Left ventricle myocardium inferior (tissue), 1 donor: ENCODE measurements at regions of chr20 and their contacts with region 1.

Region 1: GRCh38 chr20:63056236-63056948 is 49.6 kb upstream of the BHLHE23 start:
- DNase-seq: peak; percentile 16
- H3K4me3 ChIP-seq: peak overlapping the region; percentile 23
- H3K27ac ChIP-seq: no peak overlapping the region
- H3K4me1 ChIP-seq: peaks cover 8% of the 10 kb centered on the region
- H3K27me3 ChIP-seq: peaks cover 97% of the 10 kb centered on the region
- CTCF ChIP-seq: peak; percentile 93

Region 2: GRCh38 chr20:62952373-62952967 is 103.9 kb before region 1 on chr20 and contains the start of gene SLC17A9:
- intact Hi-C with region 1: no loop called
- DNase-seq: peak; percentile 68
- H3K4me3 ChIP-seq: peak within 1 kb of the TSS; percentile 53
- H3K27ac ChIP-seq: peak within 1 kb of the TSS; percentile 82
- H3K4me1 ChIP-seq: peaks cover 47% of the 10 kb centered on the region
- H3K27me3 ChIP-seq: no peaks in the 10 kb centered on the region
- CTCF ChIP-seq: no peak
- total RNA-seq, gene SLC17A9: 0.47 TPM

Region 3: GRCh38 chr20:63106108-63106764 is 49.8 kb after region 1 on chr20:
- intact Hi-C with region 1: no loop called
- DNase-seq: peak; percentile 26
- H3K4me3 ChIP-seq: no peak overlapping the region
- H3K27ac ChIP-seq: no peak overlapping the region
- H3K4me1 ChIP-seq: peaks cover 12% of the 10 kb centered on the region
- H3K27me3 ChIP-seq: peaks cover 81% of the 10 kb centered on the region
- CTCF ChIP-seq: no peak

Region 4: GRCh38 chr20:63178889-63179686 is 122.7 kb after region 1 on chr20:
- intact Hi-C with region 1: loop called (anchors 10 kb)
- DNase-seq: peak; percentile 28
- H3K4me3 ChIP-seq: peak overlapping the region; percentile 55
- H3K27ac ChIP-seq: no peak overlapping the region
- H3K4me1 ChIP-seq: peaks cover 41% of the 10 kb centered on the region
- H3K27me3 ChIP-seq: peaks cover 100% of the 10 kb centered on the region
- CTCF ChIP-seq: peak; percentile 65

Region 5: GRCh38 chr20:63261060-63261794 is 204.8 kb after region 1 on chr20:
- intact Hi-C with region 1: no loop called
- DNase-seq: no peak
- H3K4me3 ChIP-seq: no peak overlapping the region
- H3K27ac ChIP-seq: no peak overlapping the region
- H3K4me1 ChIP-seq: no peaks in the 10 kb centered on the region
- H3K27me3 ChIP-seq: peaks cover 91% of the 10 kb centered on the region
- CTCF ChIP-seq: no peak